ENCODE measurements at regions of chr16 and their contacts with region 1.

Region 1: DNA sequence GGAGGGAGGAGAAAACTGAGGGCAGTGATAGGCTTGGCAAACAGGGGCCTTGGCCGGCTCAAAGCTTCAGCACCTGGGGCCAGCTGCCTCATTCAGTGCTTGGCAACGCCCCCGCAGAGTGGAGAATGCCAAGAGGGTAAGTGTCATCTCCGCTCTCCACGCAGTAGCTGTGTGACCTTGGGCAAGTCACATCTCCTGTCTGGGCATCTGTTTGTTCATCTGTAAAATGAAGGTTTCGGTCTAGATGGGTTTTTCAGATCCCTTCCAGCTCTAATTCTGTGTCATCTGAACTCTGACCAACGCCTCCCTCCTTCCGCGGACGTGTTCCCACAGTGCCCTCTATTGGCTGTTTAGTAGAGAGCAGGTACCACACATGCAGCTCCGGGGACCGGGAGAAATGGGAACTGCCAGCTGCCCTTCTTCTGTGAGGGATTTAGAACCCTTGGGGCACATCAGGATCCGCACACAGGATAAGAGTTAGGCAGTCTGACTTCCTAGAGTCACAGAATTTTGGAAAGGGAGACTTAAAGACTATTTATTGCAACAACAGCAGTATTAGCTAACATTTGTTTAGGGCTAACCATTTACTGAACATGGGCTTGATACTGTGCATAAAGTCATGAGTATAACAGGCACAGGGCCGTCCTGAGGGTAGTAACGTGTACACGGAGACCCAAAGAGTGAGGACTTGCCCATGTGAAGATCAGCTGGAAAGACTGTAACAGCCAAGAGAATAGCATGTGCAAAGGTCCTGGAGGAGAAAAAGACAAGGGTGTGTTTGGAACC is 26.8 kb downstream of the GP2 start:
- DNase-seq: peak; percentile 54
- ATAC-seq: peak; percentile 61
- H3K4me3 Mint-ChIP-seq: no peak overlapping the region
- H3K27ac Mint-ChIP-seq: no peak overlapping the region
- H3K4me1 Mint-ChIP-seq: no peaks in the 10 kb centered on the region
- H3K27me3 Mint-ChIP-seq: no peaks in the 10 kb centered on the region

Region 2: DNA sequence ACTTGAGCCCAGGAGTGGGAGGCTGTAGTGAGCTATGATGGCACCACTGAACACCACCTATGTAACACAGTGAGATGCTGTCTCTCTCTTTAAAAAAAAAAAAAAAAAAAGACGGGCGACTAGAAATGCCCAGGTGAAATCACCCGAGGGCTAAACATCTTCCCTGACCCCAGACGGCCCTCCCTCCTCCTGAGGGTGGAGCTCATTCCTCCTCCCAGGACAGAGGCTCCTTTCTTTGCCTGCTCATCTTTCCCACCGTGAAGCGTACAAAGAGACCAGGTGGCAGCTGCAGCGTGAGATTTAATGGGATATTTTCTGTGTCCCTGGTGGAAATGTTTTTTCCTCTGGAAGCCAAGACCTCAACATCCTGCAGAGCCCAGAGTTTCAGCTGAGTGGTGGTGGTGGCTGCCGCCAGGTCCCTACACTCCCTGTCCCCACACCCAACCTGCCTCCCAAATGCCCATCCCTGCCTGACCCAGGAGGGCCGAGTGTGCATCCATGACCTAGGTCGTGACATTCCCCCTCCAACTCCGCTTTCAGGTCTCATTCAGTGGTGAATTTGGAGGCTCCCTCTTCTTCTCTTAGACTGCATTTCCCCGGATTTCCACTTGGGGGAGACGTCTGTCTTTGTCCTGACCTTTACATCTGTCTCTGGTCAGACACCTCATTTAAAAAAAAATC is 401.4 kb before region 1 on chr16:
- CTCF ChIA-PET with region 1: interaction called, 18 read pairs
- POLR2A ChIA-PET with region 1: no interaction called
- DNase-seq: peak; percentile 64
- ATAC-seq: peak; percentile 60
- H3K4me3 Mint-ChIP-seq: no peak overlapping the region
- H3K27ac Mint-ChIP-seq: no peak overlapping the region
- H3K4me1 Mint-ChIP-seq: no peaks in the 10 kb centered on the region
- H3K27me3 Mint-ChIP-seq: peaks cover 2% of the 10 kb centered on the region

Region 3: DNA sequence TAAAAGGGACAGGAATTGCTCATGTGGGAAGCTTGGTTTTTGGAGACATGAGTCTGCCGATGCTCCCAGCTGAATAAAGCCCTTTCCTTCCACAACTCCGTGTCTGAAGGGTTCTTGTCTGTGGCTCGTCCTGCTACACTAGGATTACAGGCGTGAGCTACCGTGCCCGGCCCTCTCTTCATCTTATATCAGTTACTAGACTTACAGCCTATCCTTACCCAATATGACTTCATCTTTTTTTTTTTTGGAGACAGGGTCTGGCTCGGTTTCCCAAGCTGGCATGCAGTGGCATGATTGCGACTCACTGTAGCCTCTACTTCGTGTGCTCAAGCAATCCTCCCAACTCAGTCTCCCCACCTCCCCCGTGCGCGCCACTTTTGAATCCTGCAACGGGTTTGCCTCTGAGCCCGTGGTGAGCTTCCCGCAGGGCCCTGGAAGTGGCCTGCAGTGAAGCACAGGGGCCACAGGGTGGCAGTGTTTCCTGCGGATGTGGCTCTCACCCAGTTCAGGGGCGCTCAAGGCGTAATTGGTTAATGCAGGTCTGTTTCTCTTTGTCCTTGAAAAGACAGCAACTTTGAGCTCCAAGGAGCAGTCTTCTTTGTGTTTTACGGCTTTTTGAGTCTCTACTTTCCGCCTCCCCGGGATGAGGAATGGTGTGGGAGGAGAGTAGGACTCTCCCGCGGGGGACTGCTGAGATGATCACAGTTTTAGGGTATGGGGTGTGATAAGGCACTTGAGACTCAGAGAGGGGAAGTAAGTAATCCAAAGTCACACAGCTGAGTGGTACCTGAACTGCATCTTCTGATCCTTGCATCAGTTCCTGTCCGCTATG is 393.1 kb before region 1 on chr16:
- CTCF ChIA-PET with region 1: interaction called, 93 read pairs
- POLR2A ChIA-PET with region 1: no interaction called
- DNase-seq: peak; percentile 82
- ATAC-seq: peak; percentile 98
- H3K4me3 Mint-ChIP-seq: peak overlapping the region; percentile 13
- H3K27ac Mint-ChIP-seq: peak overlapping the region; percentile 14
- H3K4me1 Mint-ChIP-seq: peaks cover 8% of the 10 kb centered on the region
- H3K27me3 Mint-ChIP-seq: peaks cover 2% of the 10 kb centered on the region